PC-9 (cell line): ENCODE measurements at regions of chr17 and their contacts with region 1.

Region 1: GRCh38 chr17:28524476-28525368 is 18.6 kb downstream of the FOXN1 start:
- DNase-seq: peak; percentile 64 to 77
- H3K4me3 ChIP-seq: no peak overlapping the region
- H3K27ac ChIP-seq: no peak overlapping the region
- H3K4me1 ChIP-seq: peaks cover 32% of the 10 kb centered on the region
- H3K27me3 ChIP-seq: no peaks in the 10 kb centered on the region; the same call in 1 of the 2 replicates
- CTCF ChIP-seq: no peak

Region 2: DNA sequence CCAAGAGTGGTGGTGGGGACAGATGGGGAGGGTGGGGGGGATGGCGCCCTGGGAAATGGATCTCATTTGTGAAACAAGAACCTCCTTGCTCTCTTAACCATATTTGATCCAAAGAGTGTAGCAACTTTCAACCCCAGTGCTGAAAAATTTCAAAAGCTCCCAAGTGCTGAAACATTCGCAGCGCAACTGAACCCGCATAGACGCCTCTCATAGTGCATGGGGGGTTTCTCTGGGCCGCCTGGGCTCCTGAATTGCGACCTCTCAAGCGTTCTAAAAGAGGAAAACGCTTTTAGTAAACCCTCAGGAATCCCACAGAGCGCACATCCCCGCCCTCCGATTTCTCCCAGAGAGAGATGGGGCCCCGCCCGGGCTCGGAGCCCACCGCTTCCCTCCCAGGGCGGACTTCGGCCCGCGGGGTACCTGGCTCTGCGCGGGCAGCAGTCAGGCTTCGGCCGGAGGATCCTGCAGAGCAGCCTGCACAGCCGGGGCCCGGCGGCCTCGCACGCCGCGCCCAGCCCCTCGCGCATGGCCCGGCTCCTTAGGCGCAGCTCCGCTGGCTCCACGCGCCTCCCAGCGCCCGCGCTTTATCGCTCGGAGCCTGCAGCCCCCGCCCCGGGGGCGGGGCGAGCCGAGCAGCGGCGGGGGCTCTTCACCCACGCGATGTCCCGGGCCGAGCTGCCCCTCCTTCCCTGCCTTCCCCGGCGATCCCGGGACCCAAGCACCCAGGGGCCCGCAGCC is 731.4 kb before region 1 on chr17:
- CTCF ChIA-PET with region 1: no interaction called
- POLR2A ChIA-PET with region 1: no interaction called
- intact Hi-C with region 1: no loop called
- DNase-seq: no peak
- H3K4me3 ChIP-seq: no peak overlapping the region
- H3K27ac ChIP-seq: no peak overlapping the region
- H3K4me1 ChIP-seq: peaks cover 11% of the 10 kb centered on the region
- H3K27me3 ChIP-seq: peaks cover 29% of the 10 kb centered on the region
- CTCF ChIP-seq: no peak

Region 3: GRCh38 chr17:28357061-28357900 is 167.4 kb before region 1 on chr17 and contains the start of gene POLDIP2:
- CTCF ChIA-PET with region 1: no interaction called
- POLR2A ChIA-PET with region 1: interaction called, 21 read pairs
- intact Hi-C with region 1: no loop called
- DNase-seq: peak; percentile 87 to 94
- H3K4me3 ChIP-seq: peak within 1 kb of the TSS; percentile 84
- H3K27ac ChIP-seq: peak within 1 kb of the TSS; percentile 23; the same call in 1 of the 2 replicates
- H3K4me1 ChIP-seq: peaks cover 19% of the 10 kb centered on the region
- H3K27me3 ChIP-seq: no peaks in the 10 kb centered on the region
- CTCF ChIP-seq: no peak
- total RNA-seq, gene POLDIP2: 84.5 and 98.2 TPM in 2 replicates

Region 4: GRCh38 chr17:28446728-28447395 is 77.9 kb before region 1 on chr17:
- CTCF ChIA-PET with region 1: no interaction called
- POLR2A ChIA-PET with region 1: no interaction called
- intact Hi-C with region 1: no loop called
- DNase-seq: peak; percentile 54 to 88
- H3K4me3 ChIP-seq: no peak overlapping the region
- H3K27ac ChIP-seq: no peak overlapping the region
- H3K4me1 ChIP-seq: peaks cover 5% of the 10 kb centered on the region; the same call in 1 of the 2 replicates
- H3K27me3 ChIP-seq: no peaks in the 10 kb centered on the region
- CTCF ChIP-seq: no peak